OCI-LY7 (cell line): ENCODE measurements at regions of chr11 and their contacts with region 1.

Region 1: GRCh38 chr11:121318848-121319834 is 26.6 kb downstream of the SC5D start:
- DNase-seq: peak; percentile 82
- H3K4me3 ChIP-seq: no peak overlapping the region
- H3K27ac ChIP-seq: peak overlapping the region; percentile 1
- H3K4me1 ChIP-seq: peaks cover 58% of the 10 kb centered on the region
- CTCF ChIP-seq: peak; percentile 99

Region 2: DNA sequence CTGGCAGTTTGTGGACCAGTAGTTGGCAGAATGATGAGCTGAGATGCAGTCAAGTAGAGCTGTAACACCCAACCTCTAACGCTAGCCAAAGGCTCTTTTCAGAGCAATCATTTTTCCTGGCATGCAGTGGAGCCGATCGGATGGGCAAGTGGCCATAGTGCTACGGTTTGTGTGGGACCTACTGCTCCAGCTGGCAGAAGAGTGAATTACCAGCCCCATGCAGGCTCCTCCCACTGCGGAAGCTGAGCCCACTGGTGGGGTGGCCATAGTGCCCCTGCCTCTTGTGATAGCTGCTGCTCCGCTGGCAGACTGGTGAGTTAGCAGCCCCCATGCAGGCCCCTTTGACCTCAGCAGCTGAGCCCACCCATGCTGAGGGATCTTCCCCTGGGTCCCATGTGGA is 53.6 kb before region 1 on chr11:
- CTCF ChIA-PET with region 1: no interaction called
- POLR2A ChIA-PET with region 1: no interaction called
- intact Hi-C with region 1: no loop called
- DNase-seq: no peak
- H3K4me3 ChIP-seq: no peak overlapping the region
- H3K27ac ChIP-seq: no peak overlapping the region
- H3K4me1 ChIP-seq: no peaks in the 10 kb centered on the region
- CTCF ChIP-seq: no peak

Region 3: DNA sequence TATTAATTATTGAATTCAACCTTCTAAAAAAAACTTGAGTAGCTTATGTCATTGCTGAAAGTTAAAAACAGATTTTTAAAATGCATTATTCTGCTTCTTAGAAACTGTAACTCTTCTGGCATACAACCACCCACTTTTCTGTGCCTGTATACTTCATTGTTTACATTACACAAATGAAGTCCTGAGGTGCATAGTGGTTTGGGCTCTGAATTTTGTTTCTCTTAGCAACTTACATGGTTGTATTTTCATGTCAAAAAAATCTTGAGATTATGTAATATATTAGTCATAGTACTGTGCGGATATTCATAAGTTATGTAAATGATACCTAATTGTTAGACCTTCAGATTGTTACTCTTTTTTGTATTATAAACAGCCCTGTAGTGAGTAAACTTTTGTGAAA is 14.4 kb before region 1 on chr11:
- CTCF ChIA-PET with region 1: no interaction called
- POLR2A ChIA-PET with region 1: no interaction called
- intact Hi-C with region 1: no loop called
- DNase-seq: no peak
- H3K4me3 ChIP-seq: no peak overlapping the region
- H3K27ac ChIP-seq: no peak overlapping the region
- H3K4me1 ChIP-seq: peaks cover 2% of the 10 kb centered on the region
- CTCF ChIP-seq: no peak

Region 4: GRCh38 chr11:121417055-121417551 is 98.0 kb after region 1 on chr11:
- CTCF ChIA-PET with region 1: no interaction called
- POLR2A ChIA-PET with region 1: interaction called, 3 read pairs
- intact Hi-C with region 1: loop called (anchors 2 kb)
- DNase-seq: peak; percentile 41
- H3K4me3 ChIP-seq: no peak overlapping the region
- H3K27ac ChIP-seq: peak overlapping the region; percentile 91
- H3K4me1 ChIP-seq: peaks cover 79% of the 10 kb centered on the region
- CTCF ChIP-seq: no peak

Region 5: DNA sequence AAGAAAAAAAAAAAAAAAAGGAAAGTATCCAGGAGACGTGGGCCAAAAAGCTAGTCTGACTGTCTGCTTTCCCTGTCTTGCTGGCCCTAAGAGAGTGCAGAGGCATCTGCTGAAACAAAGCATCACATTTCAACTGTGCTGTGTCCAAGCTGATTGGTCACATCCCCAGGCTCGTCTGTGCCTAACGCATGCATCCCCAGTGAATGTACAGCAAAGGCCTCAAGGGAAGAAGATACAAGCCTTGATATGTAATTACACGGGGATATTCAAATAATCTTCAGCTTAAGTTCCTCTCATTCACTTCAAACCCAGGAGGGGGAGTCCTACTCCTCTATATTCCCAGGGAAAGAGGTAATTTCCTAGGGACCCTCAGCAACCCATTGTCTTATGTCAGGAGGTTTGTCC is 127.6 kb after region 1 on chr11:
- CTCF ChIA-PET with region 1: no interaction called
- POLR2A ChIA-PET with region 1: interaction called, 4 read pairs
- intact Hi-C with region 1: loop called (anchors 1 kb)
- DNase-seq: peak; percentile 86
- H3K4me3 ChIP-seq: peak overlapping the region; percentile 60
- H3K27ac ChIP-seq: peak overlapping the region; percentile 97
- H3K4me1 ChIP-seq: peaks cover 91% of the 10 kb centered on the region
- CTCF ChIP-seq: peak; percentile 71

Region 6: GRCh38 chr11:121591405-121592033 is 272.4 kb after region 1 on chr11:
- CTCF ChIA-PET with region 1: interaction called, 3 read pairs
- POLR2A ChIA-PET with region 1: interaction called, 4 read pairs
- intact Hi-C with region 1: loop called (anchors 1 kb)
- DNase-seq: peak; percentile 87
- H3K4me3 ChIP-seq: peak overlapping the region; percentile 66
- H3K27ac ChIP-seq: peak overlapping the region; percentile 98
- H3K4me1 ChIP-seq: peaks cover 69% of the 10 kb centered on the region
- CTCF ChIP-seq: peak; percentile 97